ENCODE measurements at regions of chr2 and their contacts with region 1.

Region 1: DNA sequence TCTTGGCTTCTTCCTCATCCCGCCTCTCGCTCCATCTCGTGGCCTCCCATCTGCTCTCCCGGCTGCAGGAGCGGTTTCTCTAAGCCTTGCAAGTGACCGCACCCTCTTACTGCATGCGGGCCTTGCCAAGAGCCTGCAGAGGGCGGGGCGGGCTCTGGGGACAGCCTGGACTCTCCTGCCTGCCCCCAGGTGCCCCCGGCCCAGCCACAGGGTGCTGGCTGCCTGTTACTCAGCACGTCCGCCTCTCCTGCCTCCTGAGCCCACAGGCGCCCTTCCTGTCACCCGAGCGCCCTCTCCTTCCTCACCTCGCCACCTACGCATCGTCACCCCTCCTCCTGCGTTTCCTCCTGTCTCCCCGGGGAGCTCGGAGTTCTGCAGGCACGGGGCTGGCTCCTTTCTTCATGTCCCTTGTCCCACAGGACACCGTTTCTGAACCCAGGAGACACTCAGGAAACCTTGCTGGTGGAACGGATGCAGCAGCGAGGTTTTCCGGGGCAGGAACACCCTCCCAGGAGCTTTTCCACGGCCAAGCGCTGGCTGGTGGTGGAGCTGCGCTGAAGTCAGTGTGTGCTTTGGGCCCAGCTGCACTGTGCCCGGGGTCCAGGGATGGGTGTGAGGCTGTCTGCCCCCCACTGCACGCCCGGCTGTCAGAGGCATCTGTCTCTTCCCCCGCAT is 28.5 kb downstream of the HPCAL1 start:
- DNase-seq: peak; percentile 77 to 82 (median 78)
- ATAC-seq: peak; percentile 70 to 86
- H3K4me3 ChIP-seq: no peak overlapping the region
- H3K27ac ChIP-seq: peak overlapping the region; percentile 21
- H3K4me1 ChIP-seq: peaks cover 24% of the 10 kb centered on the region
- H3K27me3 ChIP-seq: no peaks in the 10 kb centered on the region

Region 2: GRCh38 chr2:9178904-9179571 is 1152.1 kb before region 1 on chr2:
- intact Hi-C with region 1: loop called in 1 of 4 experiments (anchors 10 kb)
- DNase-seq: peak; percentile 70 to 85 (median 75)
- ATAC-seq: peak; percentile 81
- H3K4me3 ChIP-seq: no peak overlapping the region
- H3K27ac ChIP-seq: peak overlapping the region; percentile 92
- H3K4me1 ChIP-seq: peaks cover 12% of the 10 kb centered on the region
- H3K27me3 ChIP-seq: no peaks in the 10 kb centered on the region